ENCODE measurements at regions of chr12 and their contacts with region 1.

Region 1: GRCh38 chr12:62250671-62251608 is 9.3 kb upstream of the USP15 start:
- DNase-seq: peak; percentile 43 to 69 (median 59)
- H3K4me3 ChIP-seq: peak overlapping the region in 2 of 3 experiments; percentile 41 to 59
- H3K4me3 Mint-ChIP-seq: peak overlapping the region; percentile 59 to 76
- H3K27ac ChIP-seq: peak overlapping the region; percentile 58 to 79
- H3K27ac Mint-ChIP-seq: peak overlapping the region; percentile 90 to 96 (median 94)
- H3K4me1 ChIP-seq: peaks cover 57 to 63% of the 10 kb centered on the region in 2 donors
- H3K4me1 Mint-ChIP-seq: peaks cover 68% of the 10 kb centered on the region
- H3K27me3 ChIP-seq: no peaks in the 10 kb centered on the region
- H3K27me3 Mint-ChIP-seq: no peaks in the 10 kb centered on the region
- CTCF ChIP-seq: no peak

Region 2: DNA sequence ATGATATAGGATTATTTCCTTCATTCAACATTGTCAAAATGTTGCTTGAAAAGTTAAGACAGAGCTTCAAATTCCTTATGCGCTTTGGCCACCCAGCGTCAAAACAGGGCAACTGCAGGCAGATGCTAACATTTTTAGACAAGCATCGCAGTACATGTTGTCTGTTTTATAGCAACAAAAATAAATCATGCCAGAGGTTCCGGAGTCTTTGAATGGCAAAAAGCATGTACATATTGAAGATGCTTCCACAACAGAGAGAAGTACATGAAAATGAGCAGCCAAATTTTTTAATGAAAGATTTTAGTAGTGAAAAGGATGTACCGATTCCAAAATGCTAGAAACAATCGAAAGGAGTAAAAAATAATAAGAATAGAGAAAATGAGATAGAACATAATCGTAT is 40.5 kb before region 1 on chr12:
- intact Hi-C with region 1: loop called (anchors 5 kb)
- DNase-seq: peak; percentile 50 to 61 (median 58)
- H3K4me3 ChIP-seq: peak overlapping the region in 1 of 3 experiments; percentile 52
- H3K4me3 Mint-ChIP-seq: peak overlapping the region in 1 of 2 donors; percentile 35
- H3K27ac ChIP-seq: peak overlapping the region in 1 of 2 donors; percentile 73
- H3K27ac Mint-ChIP-seq: peak overlapping the region; percentile 23 to 96 (median 93)
- H3K4me1 ChIP-seq: peaks cover 42 to 53% of the 10 kb centered on the region in 2 donors
- H3K4me1 Mint-ChIP-seq: peaks cover 53% of the 10 kb centered on the region
- H3K27me3 ChIP-seq: no peaks in the 10 kb centered on the region
- H3K27me3 Mint-ChIP-seq: no peaks in the 10 kb centered on the region
- CTCF ChIP-seq: peak; percentile 88

Region 3: DNA sequence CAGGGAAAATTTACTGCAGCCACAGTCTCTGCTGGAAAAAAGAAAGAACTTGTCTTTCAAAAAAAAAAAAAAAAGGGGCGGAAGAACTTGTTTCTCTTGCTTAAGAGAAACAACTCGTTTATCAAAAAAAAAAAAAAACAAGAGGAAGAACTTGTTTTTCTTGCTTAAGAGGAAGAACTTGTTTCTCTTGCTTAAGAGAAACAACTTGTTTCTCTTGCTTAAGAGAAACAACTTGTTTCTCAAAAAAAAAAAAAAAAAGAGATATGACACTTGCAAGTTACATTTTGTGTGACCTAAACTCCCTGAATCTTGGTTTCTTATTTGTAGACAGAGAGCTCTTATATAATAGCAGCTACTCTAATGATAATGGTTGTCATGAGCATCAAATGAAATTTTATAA is 35.4 kb before region 1 on chr12:
- intact Hi-C with region 1: loop called (anchors 5 kb)
- DNase-seq: peak; percentile 46 to 83 (median 77)
- H3K4me3 ChIP-seq: peak overlapping the region; percentile 10 to 71 (median 35)
- H3K4me3 Mint-ChIP-seq: peak overlapping the region; percentile 63 to 71
- H3K27ac ChIP-seq: peak overlapping the region; percentile 33 to 86
- H3K27ac Mint-ChIP-seq: peak overlapping the region; percentile 85 to 93 (median 91)
- H3K4me1 ChIP-seq: peaks cover 67 to 84% of the 10 kb centered on the region in 2 donors
- H3K4me1 Mint-ChIP-seq: peaks cover 72% of the 10 kb centered on the region
- H3K27me3 ChIP-seq: no peaks in the 10 kb centered on the region
- H3K27me3 Mint-ChIP-seq: peaks cover 0 to 2% (median 0%) of the 10 kb centered on the region in 3 donors
- CTCF ChIP-seq: no peak